ENCODE measurements at regions of chr1 and their contacts with region 1.

Region 1: GRCh38 chr1:54950369-54951163 is 29.9 kb upstream of the TMEM61 start:
- DNase-seq: peak; percentile 84
- ATAC-seq: peak; percentile 86
- H3K4me3 Mint-ChIP-seq: peak overlapping the region; percentile 58
- H3K27ac Mint-ChIP-seq: no peak overlapping the region
- H3K4me1 Mint-ChIP-seq: peaks cover 21% of the 10 kb centered on the region
- H3K27me3 Mint-ChIP-seq: peaks cover 4% of the 10 kb centered on the region; the same call in 1 of the 2 replicates
- CTCF ChIP-seq: peak; percentile 69

Region 2: DNA sequence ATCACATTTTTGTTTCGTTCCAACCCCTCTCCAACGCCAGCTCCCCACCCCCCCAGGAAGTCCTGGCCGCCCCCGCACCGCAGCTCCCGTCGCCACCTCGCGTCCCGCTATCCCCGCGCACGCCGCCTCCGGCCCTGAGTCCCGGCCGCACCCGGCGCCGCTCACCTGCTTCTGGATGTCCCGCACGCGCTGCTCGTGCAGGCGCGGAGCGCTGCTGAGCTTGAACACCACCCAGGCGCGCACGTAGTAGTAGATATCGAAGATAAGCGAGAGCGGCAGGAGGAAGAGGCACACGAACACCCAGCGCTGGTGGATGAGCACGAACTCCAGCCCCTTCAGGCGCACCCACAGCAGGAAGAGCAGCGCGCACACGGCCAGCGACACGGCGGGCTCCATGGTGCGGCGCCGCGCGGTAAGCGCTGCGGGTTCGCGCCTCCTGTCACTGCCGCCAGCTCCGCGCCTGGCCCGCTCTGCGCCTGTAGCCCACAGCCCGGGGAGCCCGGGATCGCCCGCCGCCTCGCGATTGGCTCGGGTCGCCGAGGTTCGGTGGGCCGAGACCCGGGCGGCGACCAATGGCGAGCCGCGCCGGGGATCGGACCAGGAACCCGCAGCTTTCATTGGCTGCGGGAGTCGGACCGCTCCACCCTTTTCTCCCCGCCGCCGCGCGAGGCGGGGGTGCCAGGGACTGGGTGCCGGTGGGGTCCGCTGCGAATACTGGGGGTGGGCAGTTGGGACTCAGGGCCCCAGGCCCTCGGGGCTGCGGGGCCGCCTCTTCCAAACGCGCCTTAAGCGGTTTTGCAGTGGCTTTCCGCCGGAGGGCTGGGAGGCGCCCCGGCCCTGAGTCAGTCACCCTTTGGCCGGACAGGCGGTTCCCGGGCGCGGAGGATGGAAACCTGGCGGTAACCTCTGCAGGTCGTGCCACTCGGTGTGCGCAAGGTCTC is 63.6 kb before region 1 on chr1 and contains the start of gene DHCR24:
- CTCF ChIA-PET with region 1: interaction called, 41 read pairs
- POLR2A ChIA-PET with region 1: interaction called, 3 read pairs
- DNase-seq: peak; percentile 86
- ATAC-seq: peak; percentile 91
- H3K4me3 Mint-ChIP-seq: peak within 1 kb of the TSS; percentile 95
- H3K27ac Mint-ChIP-seq: peak within 1 kb of the TSS; percentile 93
- H3K4me1 Mint-ChIP-seq: peaks cover 47% of the 10 kb centered on the region
- H3K27me3 Mint-ChIP-seq: no peaks in the 10 kb centered on the region
- CTCF ChIP-seq: no peak
- total RNA-seq, gene DHCR24: 300 to 337 TPM (median 336 TPM) in 3 replicates

Region 3: GRCh38 chr1:54962612-54963395 is 12.2 kb after region 1 on chr1:
- CTCF ChIA-PET with region 1: interaction called, 15 read pairs
- POLR2A ChIA-PET with region 1: no interaction called
- DNase-seq: no peak
- ATAC-seq: peak; percentile 67
- H3K4me3 Mint-ChIP-seq: no peak overlapping the region
- H3K27ac Mint-ChIP-seq: peak overlapping the region; percentile 80
- H3K4me1 Mint-ChIP-seq: peaks cover 35% of the 10 kb centered on the region
- H3K27me3 Mint-ChIP-seq: peaks cover 4% of the 10 kb centered on the region
- CTCF ChIP-seq: no peak

Region 4: DNA sequence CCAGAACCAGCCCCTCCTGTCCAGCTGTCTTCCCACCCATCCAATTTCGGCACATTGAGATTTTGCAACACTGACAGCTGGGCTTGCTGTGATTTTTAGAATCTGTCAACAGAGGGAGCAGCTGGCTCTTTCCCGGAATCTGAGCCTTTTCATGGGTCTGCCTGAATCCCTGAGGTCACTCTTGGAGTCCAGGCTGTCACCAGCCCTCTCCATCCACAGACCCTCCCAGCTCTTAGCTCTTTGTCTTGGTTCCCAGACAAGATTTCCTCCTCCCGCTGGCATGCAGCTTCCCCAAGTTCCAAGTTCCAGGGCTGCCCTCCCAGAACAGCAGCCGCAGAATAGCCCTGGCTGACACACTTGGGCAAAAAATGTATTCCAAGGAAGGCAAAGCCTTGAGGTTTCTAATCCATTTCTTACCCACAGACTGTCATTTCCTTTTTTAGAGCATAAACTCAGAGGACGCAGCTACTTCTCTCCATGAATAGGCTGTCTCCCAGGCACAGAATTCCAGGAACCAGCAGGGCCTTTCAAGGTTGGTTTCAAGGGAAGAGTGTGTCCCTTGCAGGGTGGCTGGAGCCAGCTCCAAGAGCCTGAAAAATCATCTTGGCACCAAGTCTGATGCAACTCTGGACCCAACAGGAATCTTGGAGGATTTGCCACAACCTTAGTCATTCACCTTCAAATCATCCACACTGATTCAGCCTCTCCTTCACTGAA is 22.8 kb after region 1 on chr1:
- CTCF ChIA-PET with region 1: interaction called, 29 read pairs
- POLR2A ChIA-PET with region 1: no interaction called
- DNase-seq: no peak
- ATAC-seq: peak; percentile 90
- H3K4me3 Mint-ChIP-seq: no peak overlapping the region
- H3K27ac Mint-ChIP-seq: no peak overlapping the region
- H3K4me1 Mint-ChIP-seq: peaks cover 20% of the 10 kb centered on the region
- H3K27me3 Mint-ChIP-seq: peaks cover 6% of the 10 kb centered on the region
- CTCF ChIP-seq: no peak

Region 5: GRCh38 chr1:54980528-54981241 is 30.1 kb after region 1 on chr1 and contains the start of gene TMEM61:
- CTCF ChIA-PET with region 1: interaction called, 22 read pairs
- POLR2A ChIA-PET with region 1: no interaction called
- DNase-seq: peak; percentile 38
- ATAC-seq: peak; percentile 63
- H3K4me3 Mint-ChIP-seq: peak within 1 kb of the TSS; percentile 65
- H3K27ac Mint-ChIP-seq: no peak within 1 kb of the TSS
- H3K4me1 Mint-ChIP-seq: peaks cover 24% of the 10 kb centered on the region
- H3K27me3 Mint-ChIP-seq: peaks cover 31% of the 10 kb centered on the region
- CTCF ChIP-seq: no peak
- total RNA-seq, gene TMEM61: 0.41 to 0.74 TPM (median 0.44 TPM) in 3 replicates

Region 6: DNA sequence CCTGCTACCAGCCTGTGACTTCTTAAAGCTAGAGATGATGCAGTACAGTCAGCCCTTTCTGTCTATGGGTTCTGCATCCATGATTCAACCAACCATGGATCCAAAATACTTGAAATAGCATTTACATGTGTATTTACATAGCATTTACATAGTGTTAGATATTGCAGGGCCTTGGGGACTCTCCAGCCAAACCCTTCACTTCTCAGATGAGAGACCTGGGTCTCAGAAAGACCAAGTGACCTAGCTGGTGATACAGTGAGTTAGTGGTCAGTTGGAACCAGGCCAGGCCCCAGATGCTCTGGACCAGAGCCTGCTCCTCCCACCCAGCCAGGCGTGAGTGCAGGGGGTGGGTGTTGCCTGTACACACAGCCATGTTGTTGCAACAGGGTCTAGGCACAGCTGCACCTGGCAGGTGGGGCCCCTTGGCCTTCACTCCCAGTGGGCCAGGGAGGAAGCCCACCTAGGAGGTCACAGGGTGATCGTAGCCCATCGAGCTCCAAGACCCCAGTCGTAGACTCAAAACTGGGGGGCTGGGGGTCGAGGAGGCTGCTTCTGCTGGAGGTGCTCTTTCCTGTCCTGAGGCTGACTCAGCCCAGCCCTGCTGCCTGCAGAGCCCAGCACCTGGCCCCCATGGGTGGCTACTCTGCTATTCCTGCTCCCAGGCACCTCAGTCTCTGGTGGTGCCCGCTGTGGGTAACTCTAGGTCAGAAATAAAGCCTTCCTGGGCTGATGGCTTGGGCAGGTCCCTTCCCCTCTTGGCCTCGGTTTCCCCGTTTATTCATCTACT is 37.5 kb after region 1 on chr1:
- CTCF ChIA-PET with region 1: interaction called, 39 read pairs
- POLR2A ChIA-PET with region 1: interaction called, 3 read pairs
- DNase-seq: no peak
- ATAC-seq: no peak
- H3K4me3 Mint-ChIP-seq: no peak overlapping the region
- H3K27ac Mint-ChIP-seq: no peak overlapping the region
- H3K4me1 Mint-ChIP-seq: peaks cover 12% of the 10 kb centered on the region
- H3K27me3 Mint-ChIP-seq: no peaks in the 10 kb centered on the region
- CTCF ChIP-seq: no peak

Region 7: DNA sequence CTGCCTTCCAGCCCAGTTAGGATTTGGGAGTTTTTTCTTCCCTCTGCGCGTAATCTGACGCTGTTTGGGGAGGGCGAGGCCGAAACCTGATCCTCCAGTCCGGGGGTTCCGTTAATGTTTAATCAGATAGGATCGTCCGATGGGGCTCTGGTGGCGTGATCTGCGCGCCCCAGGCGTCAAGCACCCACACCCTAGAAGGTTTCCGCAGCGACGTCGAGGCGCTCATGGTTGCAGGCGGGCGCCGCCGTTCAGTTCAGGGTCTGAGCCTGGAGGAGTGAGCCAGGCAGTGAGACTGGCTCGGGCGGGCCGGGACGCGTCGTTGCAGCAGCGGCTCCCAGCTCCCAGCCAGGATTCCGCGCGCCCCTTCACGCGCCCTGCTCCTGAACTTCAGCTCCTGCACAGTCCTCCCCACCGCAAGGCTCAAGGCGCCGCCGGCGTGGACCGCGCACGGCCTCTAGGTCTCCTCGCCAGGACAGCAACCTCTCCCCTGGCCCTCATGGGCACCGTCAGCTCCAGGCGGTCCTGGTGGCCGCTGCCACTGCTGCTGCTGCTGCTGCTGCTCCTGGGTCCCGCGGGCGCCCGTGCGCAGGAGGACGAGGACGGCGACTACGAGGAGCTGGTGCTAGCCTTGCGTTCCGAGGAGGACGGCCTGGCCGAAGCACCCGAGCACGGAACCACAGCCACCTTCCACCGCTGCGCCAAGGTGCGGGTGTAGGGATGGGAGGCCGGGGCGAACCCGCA is 88.9 kb after region 1 on chr1 and contains the start of gene PCSK9:
- CTCF ChIA-PET with region 1: interaction called, 19 read pairs
- POLR2A ChIA-PET with region 1: no interaction called
- DNase-seq: peak; percentile 71
- ATAC-seq: peak; percentile 68
- H3K4me3 Mint-ChIP-seq: peak within 1 kb of the TSS; percentile 86
- H3K27ac Mint-ChIP-seq: peak within 1 kb of the TSS; percentile 34; the same call in 1 of the 2 replicates
- H3K4me1 Mint-ChIP-seq: peaks cover 52% of the 10 kb centered on the region
- H3K27me3 Mint-ChIP-seq: peaks cover 52% of the 10 kb centered on the region
- CTCF ChIP-seq: no peak
- total RNA-seq, gene PCSK9: 47.9 to 73.2 TPM (median 49.3 TPM) in 3 replicates